ENCODE measurements at regions of chr18 and their contacts with region 1.

Region 1: GRCh38 chr18:61901323-61901986 is 8.6 kb upstream of the RNF152 start:
- DNase-seq: peak; percentile 89
- H3K4me3 ChIP-seq: no peak overlapping the region
- H3K27ac ChIP-seq: no peak overlapping the region
- H3K4me1 ChIP-seq: peaks cover 0 to 6% (median 1%) of the 10 kb centered on the region in 4 donors
- H3K27me3 ChIP-seq: no peaks in the 10 kb centered on the region
- CTCF ChIP-seq: peak; percentile 66 to 94 (median 76)
- EP300 ChIP-seq: no peak
- POLR2A ChIP-seq: no peak

Region 2: DNA sequence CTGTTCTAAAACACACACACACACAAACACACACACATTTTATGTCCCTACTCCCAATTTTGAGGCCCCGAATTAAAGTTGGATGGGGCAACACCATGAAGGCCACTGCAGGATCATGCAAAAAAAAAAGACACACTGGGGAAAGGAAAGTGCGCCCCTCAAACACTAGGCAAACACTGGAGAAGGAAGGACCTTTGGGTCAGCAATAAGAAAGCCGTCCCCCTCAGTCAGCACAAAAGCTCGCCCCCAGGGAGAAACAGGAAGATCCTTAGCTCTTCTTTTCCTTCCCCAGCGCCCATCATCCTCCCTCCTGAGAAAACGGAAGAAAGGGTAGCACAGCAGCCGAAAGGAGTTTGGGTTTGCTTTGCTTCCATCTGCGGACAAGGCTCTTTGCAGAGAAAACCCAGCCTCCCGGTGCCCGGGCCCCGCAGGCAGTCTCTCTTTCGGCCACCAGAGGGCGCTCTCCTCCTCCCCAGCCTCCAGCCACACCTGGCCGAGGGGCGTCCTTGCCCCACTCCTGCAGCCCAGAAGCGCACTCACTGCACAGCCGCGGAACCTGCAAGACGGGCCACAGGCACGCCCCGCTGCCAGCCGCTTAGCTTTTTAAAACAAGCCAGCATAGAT is 319.8 kb before region 1 on chr18:
- intact Hi-C with region 1: loop called (anchors 5 kb)
- DNase-seq: peak; percentile 94
- H3K4me3 ChIP-seq: peak overlapping the region; percentile 38 to 56 (median 44)
- H3K27ac ChIP-seq: peak overlapping the region; percentile 38 to 62 (median 54)
- H3K4me1 ChIP-seq: peaks cover 8 to 15% (median 13%) of the 10 kb centered on the region in 4 donors
- H3K27me3 ChIP-seq: peaks cover 0 to 10% (median 0%) of the 10 kb centered on the region in 4 donors
- CTCF ChIP-seq: peak; percentile 83 to 98 (median 96)
- EP300 ChIP-seq: no peak
- POLR2A ChIP-seq: no peak

Region 3: DNA sequence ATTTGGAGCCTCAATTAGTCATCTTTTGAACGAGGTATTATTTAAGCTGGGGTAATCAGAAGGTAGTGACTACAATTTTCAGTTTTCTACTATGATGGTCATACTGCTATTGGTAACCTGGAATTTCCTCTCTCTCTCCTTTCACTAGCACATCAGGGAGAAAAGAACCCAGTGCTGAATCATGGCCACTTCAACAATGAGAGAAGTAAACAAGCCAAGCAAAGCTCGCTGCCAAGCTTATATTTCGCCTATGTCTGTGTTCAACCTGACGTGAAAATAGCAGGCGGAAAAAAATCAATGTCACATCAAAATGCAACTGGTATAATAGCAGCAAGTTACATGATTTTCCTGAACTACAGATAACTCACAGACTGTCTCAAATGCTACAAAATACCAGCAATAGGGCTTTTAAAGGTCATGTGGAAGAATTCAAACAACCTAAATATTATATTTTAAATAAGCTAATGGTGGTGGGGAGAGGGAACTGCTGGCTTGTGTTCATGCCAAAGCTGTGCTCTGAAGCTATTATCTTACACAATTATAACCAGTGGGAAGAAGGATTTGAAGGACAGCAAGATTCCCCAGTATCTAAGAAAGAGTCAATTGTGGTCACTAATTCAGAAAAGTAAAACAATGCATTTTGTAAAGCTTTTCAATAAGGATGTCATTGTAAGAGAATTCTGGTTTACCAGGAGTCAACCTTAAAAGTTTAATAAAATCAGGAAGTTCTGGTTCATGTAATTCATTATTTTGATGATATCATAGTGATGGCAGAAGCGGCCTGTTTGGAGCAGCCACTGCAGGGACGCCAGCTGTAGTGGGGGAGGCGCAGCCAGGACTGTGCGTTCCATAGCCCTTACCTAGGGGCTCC is 46.6 kb before region 1 on chr18:
- intact Hi-C with region 1: no loop called
- DNase-seq: no peak
- H3K4me3 ChIP-seq: no peak overlapping the region
- H3K27ac ChIP-seq: no peak overlapping the region
- H3K4me1 ChIP-seq: peaks cover 0 to 11% (median 6%) of the 10 kb centered on the region in 4 donors
- H3K27me3 ChIP-seq: no peaks in the 10 kb centered on the region
- CTCF ChIP-seq: no peak
- EP300 ChIP-seq: no peak
- POLR2A ChIP-seq: no peak

Measured in esophagus muscularis mucosa (tissue), 4 donors.